ENCODE measurements at regions of chr1 and their contacts with region 1.

Region 1: GRCh38 chr1:220113136-220113695 is 19.3 kb downstream of the IARS2 start:
- DNase-seq: no peak
- H3K4me3 ChIP-seq: no peak overlapping the region
- H3K27ac ChIP-seq: no peak overlapping the region
- H3K4me1 ChIP-seq: no peaks in the 10 kb centered on the region
- H3K27me3 ChIP-seq: no peaks in the 10 kb centered on the region
- CTCF ChIP-seq: peak in 2 of 3 experiments; percentile 20 to 62; a peak in 2 of 4 replicates
- EP300 ChIP-seq: no peak
- POLR2A ChIP-seq: no peak
- RAD21 ChIP-seq: peak; percentile 24 to 25; a peak in 3 of 4 replicates

Region 2: DNA sequence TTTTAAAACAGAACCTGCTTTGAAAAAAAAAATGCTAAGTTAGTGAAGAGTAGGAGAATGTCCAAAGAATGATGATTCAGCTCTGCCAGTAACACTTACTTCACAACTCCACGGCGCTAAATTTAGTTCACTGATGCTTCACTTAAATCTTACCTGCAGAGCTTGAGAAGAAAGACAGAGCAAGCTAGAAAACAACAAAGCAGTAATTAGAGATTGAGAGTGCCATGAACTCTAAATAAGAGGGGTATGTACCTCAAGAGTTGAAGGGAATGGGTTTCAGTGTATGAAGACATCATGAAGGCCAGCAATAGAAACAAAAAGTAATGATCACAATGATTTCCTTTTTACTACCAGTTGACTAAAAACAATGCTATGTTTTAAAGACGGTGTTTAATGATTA is 99.7 kb before region 1 on chr1:
- CTCF ChIA-PET with region 1: interaction called, 12 read pairs
- POLR2A ChIA-PET with region 1: interaction called, 4 read pairs
- DNase-seq: no peak
- H3K4me3 ChIP-seq: no peak overlapping the region
- H3K27ac ChIP-seq: no peak overlapping the region
- H3K4me1 ChIP-seq: no peaks in the 10 kb centered on the region
- H3K27me3 ChIP-seq: no peaks in the 10 kb centered on the region
- CTCF ChIP-seq: no peak
- EP300 ChIP-seq: no peak
- POLR2A ChIP-seq: no peak
- RAD21 ChIP-seq: no peak

Region 3: DNA sequence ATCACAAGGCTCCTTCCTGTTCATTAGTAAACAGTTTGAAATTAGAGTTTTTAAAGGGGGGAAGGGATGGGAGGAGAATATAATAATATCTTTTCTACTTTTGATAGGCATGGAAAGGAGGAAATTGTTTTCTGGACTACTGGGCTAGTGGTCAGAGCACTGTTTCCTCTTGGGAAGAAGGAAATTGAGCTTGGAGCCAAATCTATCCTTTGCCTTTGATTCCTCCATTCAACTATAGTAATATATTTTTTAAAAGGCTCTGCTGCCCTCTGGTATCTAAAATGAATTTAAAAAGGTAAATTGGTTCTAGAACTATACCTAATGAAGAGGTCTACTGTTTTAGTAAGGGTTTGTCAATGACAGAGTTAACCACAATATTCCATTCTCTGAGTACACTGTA is 13.4 kb before region 1 on chr1:
- CTCF ChIA-PET with region 1: interaction called, 20 read pairs
- POLR2A ChIA-PET with region 1: interaction called, 3 read pairs
- DNase-seq: no peak
- H3K4me3 ChIP-seq: no peak overlapping the region
- H3K27ac ChIP-seq: no peak overlapping the region
- H3K4me1 ChIP-seq: peaks cover 0 to 3% (median 0%) of the 10 kb centered on the region in 4 experiments; a peak in 1 of 7 replicates
- H3K27me3 ChIP-seq: no peaks in the 10 kb centered on the region
- CTCF ChIP-seq: no peak
- EP300 ChIP-seq: no peak
- POLR2A ChIP-seq: no peak
- RAD21 ChIP-seq: no peak

Region 4: GRCh38 chr1:220123889-220124288 is 10.7 kb after region 1 on chr1:
- CTCF ChIA-PET with region 1: interaction called, 38 read pairs
- POLR2A ChIA-PET with region 1: interaction called, 4 read pairs
- DNase-seq: no peak
- H3K4me3 ChIP-seq: no peak overlapping the region
- H3K27ac ChIP-seq: no peak overlapping the region
- H3K4me1 ChIP-seq: peaks cover 0 to 3% (median 0%) of the 10 kb centered on the region in 4 experiments; a peak in 2 of 7 replicates
- H3K27me3 ChIP-seq: no peaks in the 10 kb centered on the region
- CTCF ChIP-seq: peak in 2 of 3 experiments; percentile 21 to 22; a peak in 2 of 4 replicates
- EP300 ChIP-seq: no peak
- POLR2A ChIP-seq: no peak
- RAD21 ChIP-seq: no peak; a peak in 1 of 4 replicates

Region 5: DNA sequence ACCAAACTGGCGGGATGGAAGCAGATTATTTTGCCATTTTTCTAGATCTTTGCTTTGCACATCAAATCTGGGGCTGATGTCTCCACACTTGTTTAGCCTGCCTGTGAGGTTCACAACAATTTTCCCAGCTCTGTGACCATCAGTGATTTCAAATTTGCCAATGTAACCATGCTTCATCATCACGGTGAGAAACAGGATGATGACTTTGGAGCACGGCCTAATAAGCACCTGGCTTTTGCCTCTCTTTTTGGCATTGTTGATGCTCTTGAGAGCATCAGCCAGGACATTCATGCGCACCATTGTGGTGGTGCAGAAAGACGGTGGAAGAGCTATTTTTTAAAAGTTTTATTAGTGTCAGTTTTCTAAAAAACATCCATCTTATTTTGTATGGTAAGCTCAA is 30.8 kb after region 1 on chr1:
- CTCF ChIA-PET with region 1: interaction called, 11 read pairs
- POLR2A ChIA-PET with region 1: no interaction called
- DNase-seq: no peak
- H3K4me3 ChIP-seq: no peak overlapping the region
- H3K27ac ChIP-seq: no peak overlapping the region
- H3K4me1 ChIP-seq: no peaks in the 10 kb centered on the region
- H3K27me3 ChIP-seq: no peaks in the 10 kb centered on the region
- CTCF ChIP-seq: no peak
- EP300 ChIP-seq: no peak
- POLR2A ChIP-seq: no peak
- RAD21 ChIP-seq: no peak

Region 6: DNA sequence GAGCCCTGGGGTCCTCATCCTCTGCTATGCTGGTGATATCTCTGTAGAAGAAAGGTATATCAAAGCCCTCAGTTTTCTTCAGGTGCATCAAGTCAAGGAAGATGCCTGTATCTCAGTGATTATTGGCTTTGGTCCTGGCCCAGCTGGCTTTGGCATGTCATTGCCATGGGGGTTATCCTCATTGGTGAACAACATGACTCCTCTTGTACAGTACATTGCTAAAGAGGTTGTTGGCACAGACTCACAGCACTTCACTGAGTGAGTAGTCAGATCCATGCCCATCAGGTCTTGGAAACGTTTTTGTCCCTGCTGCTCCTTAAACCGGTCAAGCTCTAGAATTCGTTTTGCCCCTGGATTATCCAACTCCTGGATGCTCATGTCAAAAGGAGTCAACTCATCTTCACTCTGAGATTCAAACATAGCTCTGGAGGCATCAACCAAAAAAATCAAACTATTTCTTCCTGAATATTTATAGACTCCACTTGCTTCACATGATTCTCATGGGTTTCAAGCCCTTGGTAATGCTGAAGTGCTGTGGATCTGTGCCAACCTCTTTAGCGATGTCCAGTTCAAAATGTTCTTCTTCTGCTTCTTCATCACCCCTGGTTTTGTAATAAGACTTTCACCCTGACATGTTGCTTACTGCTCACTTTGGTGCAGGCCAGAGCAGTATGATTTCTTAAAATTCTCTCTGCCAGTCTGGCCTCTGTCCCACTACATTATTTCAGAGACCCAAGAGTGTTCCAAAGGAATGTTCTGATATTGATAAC is 202.0 kb after region 1 on chr1:
- CTCF ChIA-PET with region 1: no interaction called
- POLR2A ChIA-PET with region 1: no interaction called
- DNase-seq: no peak
- H3K4me3 ChIP-seq: no peak overlapping the region
- H3K27ac ChIP-seq: no peak overlapping the region
- H3K4me1 ChIP-seq: peaks cover 0 to 5% (median 0%) of the 10 kb centered on the region in 4 experiments; a peak in 1 of 7 replicates
- H3K27me3 ChIP-seq: no peaks in the 10 kb centered on the region
- CTCF ChIP-seq: no peak
- EP300 ChIP-seq: no peak
- POLR2A ChIP-seq: no peak
- RAD21 ChIP-seq: no peak

Measured in H1 (cell line).